H1 (cell line): ENCODE measurements at regions of chr4 and their contacts with region 1.

Region 1: GRCh38 chr4:5998333-5998936 is 19.8 kb downstream of the C4orf50 start:
- DNase-seq: peak; percentile 38 to 79
- H3K4me3 ChIP-seq: no peak overlapping the region
- H3K27ac ChIP-seq: no peak overlapping the region
- H3K4me1 ChIP-seq: no peaks in the 10 kb centered on the region
- H3K27me3 ChIP-seq: 0 out of 7 replicates have a peak, but pooled peaks cover 0 to 1% (median 0%) of the 10 kb centered on the region in 4 experiments
- CTCF ChIP-seq: peak in 2 of 3 experiments; percentile 93 to 97; a peak in 3 of 4 replicates
- EP300 ChIP-seq: no peak
- POLR2A ChIP-seq: no peak
- RAD21 ChIP-seq: peak; percentile 98 to 99

Region 2: GRCh38 chr4:5785806-5786680 is 212.4 kb before region 1 on chr4:
- CTCF ChIA-PET with region 1: no interaction called
- POLR2A ChIA-PET with region 1: no interaction called
- DNase-seq: no peak
- H3K4me3 ChIP-seq: no peak overlapping the region
- H3K27ac ChIP-seq: no peak overlapping the region
- H3K4me1 ChIP-seq: peaks cover 0 to 2% (median 1%) of the 10 kb centered on the region in 4 experiments; a peak in 1 of 7 replicates
- H3K27me3 ChIP-seq: no peaks in the 10 kb centered on the region
- CTCF ChIP-seq: no peak
- EP300 ChIP-seq: no peak
- POLR2A ChIP-seq: no peak
- RAD21 ChIP-seq: no peak

Region 3: DNA sequence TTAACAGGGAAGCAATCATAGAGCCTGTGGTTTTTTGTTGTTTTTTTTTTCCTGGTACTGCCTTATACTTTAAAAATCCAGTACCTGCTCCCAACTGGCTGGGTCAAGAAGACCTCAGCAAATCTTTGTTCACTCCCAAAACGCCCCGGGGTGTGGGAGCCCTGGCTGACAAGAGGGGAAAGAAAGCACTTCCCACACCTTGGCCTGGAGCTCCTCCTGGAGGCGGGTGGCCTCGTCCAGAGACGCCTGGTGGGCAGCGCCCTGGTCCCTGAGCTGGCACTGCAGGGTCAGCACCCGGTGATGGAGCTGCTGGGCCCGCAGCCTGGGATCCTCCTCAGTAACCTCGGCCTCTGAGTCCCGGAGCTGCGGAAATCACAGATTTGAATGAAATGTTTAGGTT is 18.5 kb before region 1 on chr4:
- CTCF ChIA-PET with region 1: interaction called, 18 read pairs
- POLR2A ChIA-PET with region 1: no interaction called
- DNase-seq: peak; percentile 56 to 87
- H3K4me3 ChIP-seq: no peak overlapping the region
- H3K27ac ChIP-seq: no peak overlapping the region
- H3K4me1 ChIP-seq: peaks cover 0 to 2% (median 0%) of the 10 kb centered on the region in 4 experiments; a peak in 1 of 7 replicates
- H3K27me3 ChIP-seq: no peaks in the 10 kb centered on the region
- CTCF ChIP-seq: peak; percentile 92 to 99 (median 92)
- EP300 ChIP-seq: no peak
- POLR2A ChIP-seq: no peak
- RAD21 ChIP-seq: peak; percentile 99 to 100

Region 4: GRCh38 chr4:6011686-6012085 is 13.3 kb after region 1 on chr4:
- CTCF ChIA-PET with region 1: interaction called, 74 read pairs
- POLR2A ChIA-PET with region 1: no interaction called
- DNase-seq: no peak
- H3K4me3 ChIP-seq: no peak overlapping the region
- H3K27ac ChIP-seq: no peak overlapping the region
- H3K4me1 ChIP-seq: no peaks in the 10 kb centered on the region; a peak in 1 of 7 replicates
- H3K27me3 ChIP-seq: peaks cover 0 to 21% (median 17%) of the 10 kb centered on the region in 4 experiments; a peak in 6 of 7 replicates
- CTCF ChIP-seq: no peak
- EP300 ChIP-seq: no peak
- POLR2A ChIP-seq: no peak
- RAD21 ChIP-seq: no peak

Region 5: DNA sequence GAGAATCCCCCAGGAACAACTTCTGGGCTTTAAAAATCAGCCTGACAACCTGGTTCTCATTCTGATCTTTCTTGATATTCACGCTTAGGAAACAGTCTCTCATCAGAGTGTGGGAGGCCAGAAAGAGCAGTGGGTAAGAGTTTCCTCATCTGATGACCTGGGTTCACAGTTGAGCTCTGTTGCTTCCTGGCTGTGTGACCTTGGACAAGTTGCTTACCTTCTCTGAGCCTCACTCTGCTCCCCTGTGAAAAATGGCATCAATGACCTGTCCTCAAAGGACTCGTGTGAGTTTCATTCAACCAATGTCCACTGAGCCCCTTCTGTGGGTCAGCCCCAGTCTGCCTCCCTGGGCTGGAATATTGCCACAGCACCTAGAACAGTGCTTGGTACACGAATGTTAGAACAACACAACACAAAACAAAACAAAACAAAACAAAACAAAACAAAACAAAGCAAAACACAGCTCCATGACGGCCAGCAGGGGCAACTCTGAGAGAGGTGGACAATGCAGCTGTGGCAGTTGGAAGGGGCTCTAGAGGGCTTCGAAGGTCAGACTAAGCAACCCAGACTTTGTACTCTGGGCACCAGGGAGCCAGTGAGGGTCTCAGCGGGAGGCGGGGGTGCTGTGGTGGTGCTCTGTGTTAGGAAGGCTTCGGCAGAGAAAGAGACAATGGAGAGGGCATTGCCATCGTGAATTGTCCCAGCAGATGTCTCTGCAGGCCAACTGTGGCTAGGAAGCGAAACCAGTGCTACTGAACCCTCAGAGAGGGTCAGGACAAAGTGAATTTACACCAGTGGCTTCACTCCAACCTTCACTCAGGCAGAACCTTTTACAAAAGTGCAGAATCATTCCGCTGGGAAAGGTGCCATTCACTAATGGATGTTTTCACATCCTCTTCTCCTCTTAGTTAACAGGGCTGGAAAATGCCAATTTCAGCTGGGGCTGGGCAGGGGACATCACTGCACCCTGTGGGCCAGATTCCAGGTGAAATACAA is 34.1 kb after region 1 on chr4:
- CTCF ChIA-PET with region 1: interaction called, 19 read pairs
- POLR2A ChIA-PET with region 1: no interaction called
- DNase-seq: no peak
- H3K4me3 ChIP-seq: no peak overlapping the region
- H3K27ac ChIP-seq: no peak overlapping the region
- H3K4me1 ChIP-seq: peaks cover 0 to 9% (median 3%) of the 10 kb centered on the region in 4 experiments; a peak in 5 of 7 replicates
- H3K27me3 ChIP-seq: no peaks in the 10 kb centered on the region; a peak in 1 of 7 replicates
- CTCF ChIP-seq: peak in 1 of 3 experiments; percentile 26; a peak in 1 of 4 replicates
- EP300 ChIP-seq: no peak
- POLR2A ChIP-seq: no peak
- RAD21 ChIP-seq: peak; percentile 29 to 43; a peak in 3 of 4 replicates

Region 6: DNA sequence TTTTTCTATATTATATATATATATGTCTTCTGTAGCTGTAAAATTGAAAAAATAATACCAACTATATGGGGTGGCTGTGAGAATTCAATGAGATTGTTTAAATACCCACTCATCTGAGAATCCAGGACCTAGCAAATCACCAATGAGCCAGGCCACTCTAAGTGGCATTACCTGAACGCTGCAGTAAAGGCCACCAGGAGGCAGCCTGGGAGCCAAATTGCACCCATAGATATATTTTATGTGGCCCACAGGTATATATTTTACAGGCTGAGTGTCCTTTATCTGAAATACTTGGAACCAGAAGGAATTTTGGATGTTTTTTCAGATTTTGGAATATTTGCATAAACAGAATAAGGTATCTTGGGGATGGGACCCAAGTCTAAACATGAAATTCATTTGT is 78.0 kb after region 1 on chr4:
- CTCF ChIA-PET with region 1: interaction called, 22 read pairs
- POLR2A ChIA-PET with region 1: no interaction called
- DNase-seq: no peak
- H3K4me3 ChIP-seq: no peak overlapping the region
- H3K27ac ChIP-seq: no peak overlapping the region
- H3K4me1 ChIP-seq: peaks cover 4 to 8% (median 6%) of the 10 kb centered on the region in 4 experiments
- H3K27me3 ChIP-seq: no peaks in the 10 kb centered on the region
- CTCF ChIP-seq: peak; percentile 68 to 80 (median 69)
- EP300 ChIP-seq: no peak
- POLR2A ChIP-seq: no peak
- RAD21 ChIP-seq: peak; percentile 64 to 75

Region 7: GRCh38 chr4:6095023-6095752 is 96.8 kb after region 1 on chr4:
- CTCF ChIA-PET with region 1: interaction called, 111 read pairs
- POLR2A ChIA-PET with region 1: no interaction called
- DNase-seq: no peak
- H3K4me3 ChIP-seq: no peak overlapping the region
- H3K27ac ChIP-seq: no peak overlapping the region
- H3K4me1 ChIP-seq: peaks cover 0 to 5% (median 0%) of the 10 kb centered on the region in 4 experiments; a peak in 1 of 7 replicates
- H3K27me3 ChIP-seq: no peaks in the 10 kb centered on the region; a peak in 1 of 7 replicates
- CTCF ChIP-seq: no peak
- EP300 ChIP-seq: no peak
- POLR2A ChIP-seq: no peak
- RAD21 ChIP-seq: no peak

Region 8: GRCh38 chr4:6250235-6250983 is 252.0 kb after region 1 on chr4:
- CTCF ChIA-PET with region 1: interaction called, 14 read pairs
- POLR2A ChIA-PET with region 1: no interaction called
- DNase-seq: peak in 1 of 2 experiments; percentile 62
- H3K4me3 ChIP-seq: peak overlapping the region; percentile 5 to 50 (median 26); a peak in 6 of 8 replicates
- H3K27ac ChIP-seq: no peak overlapping the region
- H3K4me1 ChIP-seq: peaks cover 0 to 5% (median 4%) of the 10 kb centered on the region in 4 experiments; a peak in 3 of 7 replicates
- H3K27me3 ChIP-seq: no peaks in the 10 kb centered on the region; a peak in 1 of 7 replicates
- CTCF ChIP-seq: peak in 2 of 3 experiments; percentile 69 to 70; a peak in 3 of 4 replicates
- EP300 ChIP-seq: no peak
- POLR2A ChIP-seq: no peak
- RAD21 ChIP-seq: peak; percentile 83 to 86

Region 9: DNA sequence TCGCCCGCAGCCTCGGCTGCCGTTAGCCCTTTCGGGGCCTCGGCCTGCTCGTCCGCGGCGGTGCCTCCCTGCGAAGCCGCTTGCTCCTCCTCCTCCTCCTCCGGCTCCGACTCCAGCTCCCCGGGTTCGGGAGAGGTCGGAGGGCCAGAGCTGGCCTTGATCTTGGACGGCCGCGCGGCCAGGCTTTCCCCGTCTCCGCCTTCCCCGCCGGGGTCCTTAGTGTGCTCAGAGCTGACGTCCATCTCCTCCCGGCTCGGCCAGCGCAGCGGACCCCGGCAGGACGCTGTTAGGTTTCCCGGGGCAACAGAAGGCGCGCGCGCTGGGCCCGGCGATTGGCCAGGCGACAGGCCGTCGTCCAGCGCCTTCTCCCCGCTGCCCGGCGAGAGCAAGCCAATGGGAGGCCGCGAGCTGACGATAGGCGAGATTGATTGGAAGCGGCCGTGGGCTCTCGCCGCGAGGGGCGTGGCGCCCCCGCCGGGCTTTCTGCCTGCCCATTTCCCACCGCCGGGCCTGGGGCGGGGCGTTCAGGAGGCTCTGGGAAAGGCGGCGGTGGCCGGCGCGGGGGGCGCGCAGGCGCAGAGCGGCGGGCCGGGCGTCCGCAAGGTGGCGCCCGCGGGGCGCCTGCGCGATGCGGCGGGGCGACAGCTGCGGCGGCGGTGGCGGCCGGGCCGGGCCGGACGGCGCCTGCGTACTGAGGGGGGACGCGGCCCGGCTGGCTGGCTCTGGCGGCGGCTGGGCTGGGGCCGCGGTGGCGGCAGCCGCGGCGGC is 1044.4 kb after region 1 on chr4 and contains the start of gene TADA2B:
- CTCF ChIA-PET with region 1: no interaction called
- POLR2A ChIA-PET with region 1: no interaction called
- DNase-seq: peak; percentile 92 to 96
- H3K4me3 ChIP-seq: peak within 1 kb of the TSS; percentile 74 to 92 (median 89)
- H3K27ac ChIP-seq: peak within 1 kb of the TSS; percentile 23; the same call in 1 of the 2 replicates
- H3K4me1 ChIP-seq: peaks cover 0 to 15% (median 8%) of the 10 kb centered on the region in 4 experiments; a peak in 5 of 7 replicates
- H3K27me3 ChIP-seq: peaks cover 11 to 29% (median 20%) of the 10 kb centered on the region in 4 experiments
- CTCF ChIP-seq: peak in 2 of 3 experiments; percentile 37 to 56; a peak in 3 of 4 replicates
- EP300 ChIP-seq: no peak
- POLR2A ChIP-seq: no peak
- RAD21 ChIP-seq: no peak
- total RNA-seq, gene TADA2B: 12.1 and 12.3 TPM in 2 replicates